MCF 10A (cell line): ENCODE measurements at regions of chr15 and their contacts with region 1.

Region 1: DNA sequence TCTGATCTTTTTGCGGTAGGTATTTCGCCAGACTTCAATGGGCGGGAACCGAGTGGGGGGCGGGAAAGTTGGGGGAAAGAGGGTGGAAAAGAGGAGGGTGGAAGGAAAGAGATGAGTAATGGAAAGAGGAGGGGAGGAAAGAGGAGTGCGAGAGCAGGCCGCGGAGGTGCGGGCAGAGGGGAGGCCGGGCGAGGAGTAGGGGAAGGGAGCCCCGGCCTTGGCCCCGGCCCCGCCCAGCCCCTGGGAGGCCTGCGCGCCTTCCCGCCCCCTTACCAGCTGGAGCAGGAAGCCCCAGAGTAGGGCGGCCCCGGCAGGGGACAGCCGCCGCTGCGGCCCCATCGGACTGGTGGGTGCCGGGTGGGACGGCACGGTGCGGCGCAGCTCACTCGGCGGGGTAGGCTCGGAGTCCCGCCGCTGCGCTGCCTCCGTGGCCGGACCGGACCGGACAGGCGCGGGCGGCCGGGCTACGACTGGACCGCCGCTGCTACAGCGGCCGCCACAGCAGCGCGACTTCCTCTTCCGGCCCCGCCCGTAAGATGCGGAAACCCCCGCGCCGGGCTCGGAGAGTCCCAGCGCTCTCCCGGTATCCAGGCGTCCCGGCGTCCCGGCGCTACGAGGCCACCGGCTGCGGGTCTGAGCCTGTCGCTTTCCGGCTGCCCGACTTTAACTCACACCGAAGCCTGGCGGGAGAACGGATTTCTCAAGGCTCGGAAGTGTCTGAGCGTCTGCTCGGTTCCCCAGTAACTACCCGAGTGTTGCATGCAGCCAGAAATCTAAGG is at the start of gene SPPL2A:
- DNase-seq: peak; percentile 87
- H3K4me3 Mint-ChIP-seq: peak within 1 kb of the TSS; percentile 78
- H3K27ac Mint-ChIP-seq: peak within 1 kb of the TSS; percentile 59
- H3K4me1 Mint-ChIP-seq: peaks cover 34% of the 10 kb centered on the region
- H3K27me3 Mint-ChIP-seq: no peaks in the 10 kb centered on the region
- CTCF ChIP-seq: no peak
- total RNA-seq, gene SPPL2A: 93.0 and 122 TPM in 2 replicates

Region 2: GRCh38 chr15:50675536-50676144 is 89.7 kb before region 1 on chr15:
- CTCF ChIA-PET with region 1: no interaction called
- POLR2A ChIA-PET with region 1: no interaction called
- intact Hi-C with region 1: no loop called
- DNase-seq: peak; percentile 45
- H3K4me3 Mint-ChIP-seq: no peak overlapping the region
- H3K27ac Mint-ChIP-seq: peak overlapping the region; percentile 68
- H3K4me1 Mint-ChIP-seq: peaks cover 12% of the 10 kb centered on the region
- H3K27me3 Mint-ChIP-seq: no peaks in the 10 kb centered on the region
- CTCF ChIP-seq: peak; percentile 69

Region 3: DNA sequence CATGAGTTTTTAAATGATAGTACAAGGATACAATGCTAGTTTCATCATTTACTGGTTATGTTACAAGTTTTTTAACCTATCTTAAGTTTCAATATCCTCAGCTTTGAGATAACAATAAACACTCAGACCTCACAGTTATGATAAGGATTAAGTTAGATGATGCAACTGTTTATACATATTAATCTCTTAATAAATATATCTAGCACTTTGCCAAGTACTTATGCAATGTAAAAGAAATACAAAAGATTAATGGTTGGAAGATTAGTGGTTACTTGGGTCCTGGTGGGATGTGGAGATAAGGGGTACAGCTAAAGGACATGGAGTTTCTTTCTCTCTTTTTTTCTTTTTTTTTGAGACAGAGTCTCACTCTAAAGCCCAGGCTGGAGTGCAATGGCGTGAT is 11.9 kb before region 1 on chr15:
- CTCF ChIA-PET with region 1: interaction called, 3 read pairs
- POLR2A ChIA-PET with region 1: interaction called, 47 read pairs
- intact Hi-C with region 1: no loop called
- DNase-seq: no peak
- H3K4me3 Mint-ChIP-seq: no peak overlapping the region
- H3K27ac Mint-ChIP-seq: peak overlapping the region; percentile 63
- H3K4me1 Mint-ChIP-seq: peaks cover 15% of the 10 kb centered on the region
- H3K27me3 Mint-ChIP-seq: no peaks in the 10 kb centered on the region
- CTCF ChIP-seq: no peak

Region 4: DNA sequence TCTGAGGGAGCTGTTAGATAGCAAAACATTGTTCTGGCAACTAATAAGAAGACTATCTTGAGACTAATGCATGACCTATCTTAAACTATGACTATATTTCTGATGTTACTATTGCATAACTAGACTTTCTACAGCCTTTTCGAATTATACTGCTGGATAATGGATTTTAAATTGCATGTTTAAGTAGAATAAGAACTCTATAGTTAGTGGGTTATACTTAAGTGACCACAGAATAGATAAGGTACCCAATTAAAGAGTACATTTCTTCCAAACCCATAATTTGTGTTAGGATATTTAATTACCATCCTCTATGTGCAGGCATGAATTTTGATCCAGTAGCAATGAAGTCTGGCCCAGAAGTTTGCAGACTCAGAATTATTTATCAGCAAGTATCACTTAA is 44.7 kb after region 1 on chr15:
- CTCF ChIA-PET with region 1: no interaction called
- POLR2A ChIA-PET with region 1: no interaction called
- intact Hi-C with region 1: no loop called
- DNase-seq: no peak
- H3K4me3 Mint-ChIP-seq: no peak overlapping the region
- H3K27ac Mint-ChIP-seq: no peak overlapping the region
- H3K4me1 Mint-ChIP-seq: peaks cover 6% of the 10 kb centered on the region
- H3K27me3 Mint-ChIP-seq: no peaks in the 10 kb centered on the region
- CTCF ChIP-seq: no peak

Region 5: GRCh38 chr15:50855092-50855396 is 89.7 kb after region 1 on chr15:
- CTCF ChIA-PET with region 1: no interaction called
- POLR2A ChIA-PET with region 1: interaction called, 26 read pairs
- intact Hi-C with region 1: no loop called
- DNase-seq: no peak
- H3K4me3 Mint-ChIP-seq: no peak overlapping the region
- H3K27ac Mint-ChIP-seq: peak overlapping the region; percentile 85
- H3K4me1 Mint-ChIP-seq: peaks cover 9% of the 10 kb centered on the region
- H3K27me3 Mint-ChIP-seq: no peaks in the 10 kb centered on the region
- CTCF ChIP-seq: no peak

Region 6: GRCh38 chr15:50876989-50877360 is 111.6 kb after region 1 on chr15:
- CTCF ChIA-PET with region 1: interaction called, 6 read pairs
- POLR2A ChIA-PET with region 1: interaction called, 16 read pairs
- intact Hi-C with region 1: loop called (anchors 1 kb)
- DNase-seq: peak; percentile 90
- H3K4me3 Mint-ChIP-seq: peak overlapping the region; percentile 49
- H3K27ac Mint-ChIP-seq: peak overlapping the region; percentile 52
- H3K4me1 Mint-ChIP-seq: peaks cover 26% of the 10 kb centered on the region
- H3K27me3 Mint-ChIP-seq: peaks cover 13% of the 10 kb centered on the region
- CTCF ChIP-seq: peak; percentile 95

Region 7: GRCh38 chr15:50883903-50884302 is 118.5 kb after region 1 on chr15:
- CTCF ChIA-PET with region 1: interaction called, 4 read pairs
- POLR2A ChIA-PET with region 1: interaction called, 20 read pairs
- intact Hi-C with region 1: no loop called
- DNase-seq: peak; percentile 89
- H3K4me3 Mint-ChIP-seq: peak overlapping the region; percentile 74
- H3K27ac Mint-ChIP-seq: peak overlapping the region; percentile 96
- H3K4me1 Mint-ChIP-seq: peaks cover 57% of the 10 kb centered on the region
- H3K27me3 Mint-ChIP-seq: no peaks in the 10 kb centered on the region
- CTCF ChIP-seq: no peak

Region 8: DNA sequence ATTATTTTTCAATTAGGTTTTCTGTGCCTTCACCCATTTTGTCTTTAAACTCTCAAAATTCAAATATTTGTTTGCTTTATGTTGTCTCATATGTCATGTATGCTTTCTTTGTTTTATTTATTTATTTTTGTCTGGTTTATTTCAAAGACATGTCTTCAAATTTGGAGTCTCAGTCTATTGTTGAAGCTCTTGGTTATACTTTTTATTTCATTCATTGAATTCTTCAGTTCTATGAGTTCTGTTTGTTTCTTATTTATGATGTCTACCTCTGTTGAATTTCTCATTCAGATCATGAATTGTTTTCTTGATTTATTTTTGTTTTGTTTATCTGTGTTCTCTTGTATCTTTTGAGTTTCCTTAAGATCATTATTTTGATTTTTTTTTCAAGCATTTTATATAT is 198.7 kb after region 1 on chr15:
- CTCF ChIA-PET with region 1: no interaction called
- POLR2A ChIA-PET with region 1: no interaction called
- intact Hi-C with region 1: no loop called
- DNase-seq: no peak
- H3K4me3 Mint-ChIP-seq: no peak overlapping the region
- H3K27ac Mint-ChIP-seq: no peak overlapping the region
- H3K4me1 Mint-ChIP-seq: no peaks in the 10 kb centered on the region
- H3K27me3 Mint-ChIP-seq: no peaks in the 10 kb centered on the region
- CTCF ChIP-seq: no peak